HEK293 (cell line): ENCODE measurements at regions of chr18 and their contacts with region 1.

Region 1: DNA sequence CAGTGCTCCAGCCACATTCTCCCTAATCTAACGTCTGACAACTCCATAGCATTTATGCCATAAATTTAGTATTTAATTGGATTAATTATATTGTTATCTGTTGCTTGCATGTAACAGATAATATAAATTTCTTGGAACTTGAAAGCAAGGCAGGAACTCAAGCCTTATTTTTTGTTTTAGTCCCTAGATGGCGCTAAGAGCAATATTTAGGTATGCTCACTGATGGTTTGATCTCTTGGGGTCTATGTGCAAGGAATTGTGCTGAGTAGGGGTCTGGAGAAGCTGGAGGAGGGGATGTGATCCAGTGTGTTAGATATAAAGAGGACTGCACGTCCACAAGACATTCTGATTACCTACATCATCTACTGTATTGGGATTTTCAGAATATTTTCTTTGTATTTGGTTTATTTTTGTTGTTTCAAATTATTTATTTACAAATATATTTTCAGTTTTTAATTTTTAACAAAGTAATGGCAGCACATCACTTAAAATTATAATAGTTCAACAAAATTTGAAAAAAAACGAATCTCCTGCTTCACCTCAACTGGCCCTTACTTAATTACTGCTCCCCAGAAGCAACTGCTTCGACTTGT is 32.8 kb downstream of the KATNAL2 start:
- H3K4me3 ChIP-seq: no peak overlapping the region
- H3K27ac ChIP-seq: no peak overlapping the region
- H3K4me1 ChIP-seq: no peaks in the 10 kb centered on the region
- CTCF ChIP-seq: no peak

Region 2: GRCh38 chr18:46622999-46623398 is 327.2 kb before region 1 on chr18:
- CTCF ChIA-PET with region 1: no interaction called
- POLR2A ChIA-PET with region 1: no interaction called
- H3K4me3 ChIP-seq: no peak overlapping the region
- H3K27ac ChIP-seq: no peak overlapping the region
- H3K4me1 ChIP-seq: no peaks in the 10 kb centered on the region
- CTCF ChIP-seq: no peak

Region 3: DNA sequence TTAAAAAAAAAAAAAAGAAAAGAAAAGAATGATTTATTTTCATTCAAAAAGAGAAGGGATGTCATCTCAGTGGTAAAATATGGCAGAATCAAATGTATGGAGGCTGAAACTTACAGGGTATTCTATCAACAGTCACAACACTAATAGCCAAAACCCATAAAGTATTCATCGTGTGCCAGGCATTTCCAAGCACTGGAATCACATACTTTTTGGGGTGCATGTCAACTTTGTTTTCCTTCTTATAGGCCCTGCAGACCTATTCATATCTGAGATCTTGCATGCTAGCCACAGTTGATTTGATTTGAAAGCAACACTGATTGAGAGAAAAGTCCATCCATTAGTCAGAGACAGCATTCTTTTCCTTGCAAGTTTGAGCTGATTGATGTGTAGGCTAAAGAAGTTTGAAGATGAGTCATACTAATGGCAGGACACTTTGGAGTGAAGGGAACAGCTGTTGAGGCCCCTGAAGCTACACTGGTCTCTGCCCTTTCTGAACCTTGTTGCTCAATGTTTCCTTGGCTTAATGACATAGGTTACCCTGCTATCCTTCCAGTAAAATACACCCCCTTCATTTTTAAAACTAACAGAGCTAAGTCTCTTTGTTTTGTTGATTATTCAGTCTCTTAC is 10.7 kb before region 1 on chr18:
- CTCF ChIA-PET with region 1: interaction called, 18 read pairs
- POLR2A ChIA-PET with region 1: no interaction called
- H3K4me3 ChIP-seq: no peak overlapping the region
- H3K27ac ChIP-seq: no peak overlapping the region
- H3K4me1 ChIP-seq: no peaks in the 10 kb centered on the region
- CTCF ChIP-seq: no peak